Endothelial cell of umbilical vein (primary cell): ENCODE measurements at regions of chr4 and their contacts with region 1.

Region 1: GRCh38 chr4:18670034-18670433 is 648.5 kb upstream of the LCORL start:
- DNase-seq: no peak
- H3K4me3 ChIP-seq: no peak overlapping the region
- H3K27ac ChIP-seq: no peak overlapping the region
- H3K4me1 ChIP-seq: no peaks in the 10 kb centered on the region
- H3K27me3 ChIP-seq: no peaks in the 10 kb centered on the region
- CTCF ChIP-seq: no peak
- POLR2A ChIP-seq: no peak

Region 2: GRCh38 chr4:18608908-18609533 is 61.0 kb before region 1 on chr4:
- CTCF ChIA-PET with region 1: no interaction called
- POLR2A ChIA-PET with region 1: no interaction called
- dilution Hi-C with region 1: no loop called
- intact Hi-C with region 1: no loop called
- DNase-seq: no peak
- H3K4me3 ChIP-seq: no peak overlapping the region
- H3K27ac ChIP-seq: no peak overlapping the region
- H3K4me1 ChIP-seq: no peaks in the 10 kb centered on the region
- H3K27me3 ChIP-seq: no peaks in the 10 kb centered on the region
- CTCF ChIP-seq: no peak
- POLR2A ChIP-seq: no peak

Region 3: GRCh38 chr4:18621186-18621585 is 48.8 kb before region 1 on chr4:
- CTCF ChIA-PET with region 1: no interaction called
- POLR2A ChIA-PET with region 1: no interaction called
- dilution Hi-C with region 1: no loop called
- intact Hi-C with region 1: loop called (anchors 5 kb)
- DNase-seq: no peak
- H3K4me3 ChIP-seq: no peak overlapping the region
- H3K27ac ChIP-seq: no peak overlapping the region
- H3K4me1 ChIP-seq: no peaks in the 10 kb centered on the region
- H3K27me3 ChIP-seq: no peaks in the 10 kb centered on the region
- CTCF ChIP-seq: no peak
- POLR2A ChIP-seq: no peak